CD4-positive, alpha-beta memory T cell (primary cell): ENCODE measurements at regions of chr10 and their contacts with region 1.

Region 1: DNA sequence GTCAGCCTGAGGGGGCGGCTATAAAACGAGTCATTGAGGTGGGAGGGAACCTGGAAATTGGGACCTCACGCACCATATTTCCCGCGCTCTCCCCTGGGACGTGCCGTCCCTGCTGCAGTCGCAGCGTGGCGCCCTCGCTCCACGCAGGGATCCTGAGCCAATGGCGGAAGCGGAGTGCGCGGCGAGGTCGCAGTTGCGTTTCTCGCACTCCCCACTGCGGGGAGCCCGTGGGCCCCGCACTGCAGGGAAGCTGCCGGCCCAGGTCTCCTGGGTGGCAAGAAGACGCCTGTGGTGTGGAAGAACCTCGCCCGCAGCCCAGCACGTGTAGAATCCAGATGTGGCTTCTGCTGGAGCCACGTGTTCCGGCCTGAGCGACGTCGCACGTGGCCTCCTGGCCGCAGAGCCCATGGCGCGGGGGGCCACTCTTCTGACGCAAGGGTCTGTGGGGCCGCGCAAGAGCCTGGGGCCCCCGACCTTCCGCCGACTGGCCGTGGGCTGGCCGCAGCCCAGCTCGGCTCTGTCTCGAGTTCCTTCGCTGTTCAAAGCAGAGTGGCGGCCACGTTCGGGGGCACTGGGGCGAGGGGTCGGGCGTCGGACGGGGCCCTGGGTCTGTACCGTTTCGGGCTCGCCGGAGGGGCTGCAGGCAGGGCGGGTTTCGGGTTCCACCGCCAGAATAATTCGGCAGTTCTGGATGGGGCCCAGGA is 26.4 kb downstream of the HIF1AN start:
- DNase-seq: peak; percentile 77 to 79 (median 79)
- H3K4me3 ChIP-seq: no peak overlapping the region
- H3K4me3 Mint-ChIP-seq: peak overlapping the region; percentile 7 to 71 (median 58)
- H3K27ac ChIP-seq: no peak overlapping the region
- H3K27ac Mint-ChIP-seq: no peak overlapping the region
- H3K4me1 ChIP-seq: peaks cover 17% of the 10 kb centered on the region
- H3K4me1 Mint-ChIP-seq: peaks cover 14 to 22% (median 16%) of the 10 kb centered on the region in 4 donors
- H3K27me3 ChIP-seq: no peaks in the 10 kb centered on the region
- H3K27me3 Mint-ChIP-seq: peaks cover 26 to 43% of the 10 kb centered on the region in 2 donors

Region 2: DNA sequence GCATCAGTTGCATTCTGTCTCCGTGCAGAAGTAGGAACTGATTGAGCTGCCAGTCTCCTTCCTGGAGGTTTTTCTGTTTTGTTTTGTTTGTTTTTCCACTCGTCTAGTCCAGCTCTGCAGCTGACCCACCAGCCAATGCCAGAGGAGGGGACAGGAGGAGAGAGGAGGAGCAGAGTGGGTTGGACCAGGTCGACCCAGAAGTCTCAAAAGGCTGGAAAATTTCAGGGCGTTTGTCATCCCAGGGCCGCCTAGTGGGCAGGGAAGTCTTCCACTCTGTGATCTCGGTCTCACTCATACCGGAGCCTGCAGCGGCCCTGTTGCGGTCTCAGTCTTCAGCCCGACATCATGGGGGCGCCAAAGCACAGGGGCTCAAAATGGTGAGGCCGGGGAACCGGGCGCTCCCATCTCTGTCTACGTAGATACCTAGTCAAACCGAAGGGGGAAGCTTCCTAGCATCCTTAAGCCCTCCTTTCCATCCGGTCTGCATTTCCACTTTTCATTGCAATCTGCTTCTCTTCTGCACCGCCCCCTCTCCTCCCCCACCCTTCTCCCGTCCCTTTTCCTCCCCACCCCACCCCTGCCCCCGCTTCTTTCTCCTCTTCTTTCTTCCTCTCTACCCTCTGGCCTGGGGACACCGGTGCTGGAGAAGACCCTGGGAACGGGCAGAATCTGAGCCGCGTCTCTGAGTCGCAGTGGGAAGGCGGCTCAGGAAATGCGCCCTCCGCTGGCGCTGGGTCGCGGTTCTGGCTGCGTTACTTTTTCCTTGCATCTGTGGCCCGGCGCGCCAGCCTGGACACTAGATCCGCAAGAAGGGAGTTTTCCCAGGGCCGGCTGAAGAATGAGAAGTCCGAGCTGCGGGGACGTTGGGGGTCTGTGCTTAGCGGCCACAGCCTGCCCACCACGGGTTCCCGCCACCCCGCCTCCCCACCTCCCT is 167.0 kb after region 1 on chr10:
- CTCF ChIA-PET with region 1: no interaction called
- POLR2A ChIA-PET with region 1: no interaction called
- intact Hi-C with region 1: loop called (anchors 5 kb)
- DNase-seq: no peak
- H3K4me3 ChIP-seq: no peak overlapping the region
- H3K4me3 Mint-ChIP-seq: peak overlapping the region; percentile 8 to 76 (median 65)
- H3K27ac ChIP-seq: no peak overlapping the region
- H3K27ac Mint-ChIP-seq: no peak overlapping the region
- H3K4me1 ChIP-seq: peaks cover 24% of the 10 kb centered on the region
- H3K4me1 Mint-ChIP-seq: peaks cover 12 to 41% (median 26%) of the 10 kb centered on the region in 4 donors
- H3K27me3 ChIP-seq: peaks cover 52% of the 10 kb centered on the region
- H3K27me3 Mint-ChIP-seq: peaks cover 64 to 72% of the 10 kb centered on the region in 2 donors

Region 3: DNA sequence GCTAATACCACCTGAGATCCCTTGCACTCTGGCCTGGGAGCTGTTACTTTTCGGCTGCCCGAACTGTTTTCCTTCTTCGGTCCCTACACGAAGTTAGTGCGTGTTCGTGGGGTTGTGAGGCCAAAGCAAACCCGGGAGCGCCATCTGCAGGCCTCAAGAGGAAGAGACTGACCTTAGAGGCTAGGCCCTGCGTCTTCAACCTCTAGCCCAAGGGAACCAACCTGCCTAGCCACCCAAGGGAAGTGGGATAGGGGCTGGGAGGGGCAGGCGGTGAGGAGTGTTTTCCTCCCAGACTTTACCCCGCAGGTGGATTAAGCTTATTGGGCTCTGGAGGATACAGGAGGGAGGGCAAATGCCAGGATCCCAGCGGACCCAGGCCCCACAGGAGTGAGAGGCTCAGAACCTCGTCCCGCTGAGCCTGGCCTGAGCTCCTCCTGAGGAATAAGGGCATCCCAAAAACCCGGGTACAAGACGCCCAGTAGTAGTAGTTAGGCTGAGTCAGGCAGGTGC is 181.5 kb after region 1 on chr10:
- CTCF ChIA-PET with region 1: interaction called, 21 read pairs
- POLR2A ChIA-PET with region 1: no interaction called
- intact Hi-C with region 1: loop called (anchors 1 kb)
- DNase-seq: peak in 4 of 5 donors; percentile 33 to 46 (median 45)
- H3K4me3 ChIP-seq: no peak overlapping the region
- H3K4me3 Mint-ChIP-seq: peak overlapping the region in 5 of 8 donors; percentile 29 to 84 (median 54)
- H3K27ac ChIP-seq: no peak overlapping the region
- H3K27ac Mint-ChIP-seq: peak overlapping the region in 1 of 7 donors; percentile 70
- H3K4me1 ChIP-seq: peaks cover 28% of the 10 kb centered on the region
- H3K4me1 Mint-ChIP-seq: peaks cover 14 to 67% (median 38%) of the 10 kb centered on the region in 4 donors
- H3K27me3 ChIP-seq: peaks cover 60% of the 10 kb centered on the region
- H3K27me3 Mint-ChIP-seq: peaks cover 55 to 60% of the 10 kb centered on the region in 2 donors

Region 4: GRCh38 chr10:100872034-100872791 is 310.1 kb after region 1 on chr10:
- CTCF ChIA-PET with region 1: interaction called, 7 read pairs
- POLR2A ChIA-PET with region 1: no interaction called
- intact Hi-C with region 1: loop called (anchors 2 kb)
- DNase-seq: peak; percentile 7 to 46 (median 19)
- H3K4me3 ChIP-seq: no peak overlapping the region
- H3K4me3 Mint-ChIP-seq: no peak overlapping the region
- H3K27ac ChIP-seq: no peak overlapping the region
- H3K27ac Mint-ChIP-seq: no peak overlapping the region
- H3K4me1 ChIP-seq: no peaks in the 10 kb centered on the region
- H3K4me1 Mint-ChIP-seq: no peaks in the 10 kb centered on the region
- H3K27me3 ChIP-seq: no peaks in the 10 kb centered on the region
- H3K27me3 Mint-ChIP-seq: peaks cover 9 to 20% of the 10 kb centered on the region in 2 donors

Region 5: GRCh38 chr10:101012525-101013364 is 450.6 kb after region 1 on chr10:
- CTCF ChIA-PET with region 1: interaction called, 5 read pairs
- POLR2A ChIA-PET with region 1: no interaction called
- intact Hi-C with region 1: loop called (anchors 1 kb)
- DNase-seq: peak; percentile 51 to 72 (median 65)
- H3K4me3 ChIP-seq: no peak overlapping the region
- H3K4me3 Mint-ChIP-seq: no peak overlapping the region
- H3K27ac ChIP-seq: no peak overlapping the region
- H3K27ac Mint-ChIP-seq: peak overlapping the region in 3 of 7 donors; percentile 2 to 67 (median 61)
- H3K4me1 ChIP-seq: peaks cover 19% of the 10 kb centered on the region
- H3K4me1 Mint-ChIP-seq: peaks cover 10 to 15% (median 13%) of the 10 kb centered on the region in 4 donors
- H3K27me3 ChIP-seq: peaks cover 11% of the 10 kb centered on the region
- H3K27me3 Mint-ChIP-seq: peaks cover 20 to 23% of the 10 kb centered on the region in 2 donors